ENCODE measurements at regions of chr11 and their contacts with region 1.

Region 1: DNA sequence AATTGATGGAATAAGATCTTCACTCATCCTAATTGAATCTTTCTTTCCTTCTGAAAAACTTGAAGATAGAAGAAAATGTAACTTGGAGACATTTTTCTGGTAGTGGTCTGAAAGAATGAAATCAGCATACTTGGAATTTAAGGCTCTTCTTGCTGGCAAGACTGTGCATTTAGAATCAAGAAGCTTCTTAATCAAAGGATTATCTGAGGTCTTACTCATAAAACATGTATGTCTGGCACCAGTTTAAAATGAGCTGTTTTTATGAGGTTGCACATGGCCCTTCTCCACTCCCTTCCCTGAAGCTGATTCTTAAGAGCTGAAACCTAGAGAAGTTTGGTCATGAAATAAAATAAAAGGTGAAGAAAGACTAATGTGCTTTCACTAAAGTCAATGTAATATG is 77.3 kb downstream of the ARHGEF12 start:
- DNase-seq: no peak
- H3K4me3 ChIP-seq: no peak overlapping the region
- H3K27ac ChIP-seq: no peak overlapping the region
- H3K4me1 ChIP-seq: peaks cover 6% of the 10 kb centered on the region
- H3K27me3 ChIP-seq: no peaks in the 10 kb centered on the region
- CTCF ChIP-seq: no peak
- POLR2A ChIP-seq: no peak

Region 2: GRCh38 chr11:120358729-120359128 is 54.8 kb before region 1 on chr11:
- CTCF ChIA-PET with region 1: no interaction called
- POLR2A ChIA-PET with region 1: no interaction called
- dilution Hi-C with region 1: no loop called
- intact Hi-C with region 1: no loop called
- DNase-seq: no peak
- H3K4me3 ChIP-seq: no peak overlapping the region
- H3K27ac ChIP-seq: no peak overlapping the region
- H3K4me1 ChIP-seq: peaks cover 13% of the 10 kb centered on the region
- H3K27me3 ChIP-seq: no peaks in the 10 kb centered on the region
- CTCF ChIP-seq: no peak
- POLR2A ChIP-seq: no peak

Region 3: GRCh38 chr11:120400564-120401364 is 12.7 kb before region 1 on chr11:
- CTCF ChIA-PET with region 1: interaction called, 10 read pairs
- POLR2A ChIA-PET with region 1: no interaction called
- dilution Hi-C with region 1: no loop called
- intact Hi-C with region 1: no loop called
- DNase-seq: peak; percentile 93
- H3K4me3 ChIP-seq: peak overlapping the region in 2 of 3 experiments; percentile 16 to 73
- H3K27ac ChIP-seq: peak overlapping the region; percentile 78
- H3K4me1 ChIP-seq: peaks cover 36% of the 10 kb centered on the region
- H3K27me3 ChIP-seq: no peaks in the 10 kb centered on the region
- CTCF ChIP-seq: no peak
- POLR2A ChIP-seq: no peak